Dendritic cell treated with granulocyte-macrophage colony-stimulating factor and Interleukin-4, amounts not matched to agents 40 ng/mL and 50 ng/mL, for 4 days (primary cell): ENCODE measurements at regions of chr1 and their contacts with region 1.

Region 1: GRCh38 chr1:40709100-40709801 is 17.7 kb downstream of the NFYC start:
- H3K4me3 Mint-ChIP-seq: peak overlapping the region; percentile 63
- H3K27ac Mint-ChIP-seq: peak overlapping the region; percentile 68
- H3K4me1 Mint-ChIP-seq: peaks cover 56% of the 10 kb centered on the region
- H3K27me3 Mint-ChIP-seq: no peaks in the 10 kb centered on the region

Region 2: GRCh38 chr1:40531381-40532061 is 177.7 kb before region 1 on chr1 and contains the start of gene ZNF684:
- intact Hi-C with region 1: no loop called
- H3K4me3 Mint-ChIP-seq: peak within 1 kb of the TSS; percentile 96
- H3K27ac Mint-ChIP-seq: peak within 1 kb of the TSS; percentile 92
- H3K4me1 Mint-ChIP-seq: peaks cover 19% of the 10 kb centered on the region
- H3K27me3 Mint-ChIP-seq: no peaks in the 10 kb centered on the region

Region 3: GRCh38 chr1:40650075-40650474 is 59.2 kb before region 1 on chr1:
- intact Hi-C with region 1: no loop called
- H3K4me3 Mint-ChIP-seq: no peak overlapping the region
- H3K27ac Mint-ChIP-seq: no peak overlapping the region
- H3K4me1 Mint-ChIP-seq: peaks cover 21% of the 10 kb centered on the region
- H3K27me3 Mint-ChIP-seq: peaks cover 12% of the 10 kb centered on the region

Region 4: DNA sequence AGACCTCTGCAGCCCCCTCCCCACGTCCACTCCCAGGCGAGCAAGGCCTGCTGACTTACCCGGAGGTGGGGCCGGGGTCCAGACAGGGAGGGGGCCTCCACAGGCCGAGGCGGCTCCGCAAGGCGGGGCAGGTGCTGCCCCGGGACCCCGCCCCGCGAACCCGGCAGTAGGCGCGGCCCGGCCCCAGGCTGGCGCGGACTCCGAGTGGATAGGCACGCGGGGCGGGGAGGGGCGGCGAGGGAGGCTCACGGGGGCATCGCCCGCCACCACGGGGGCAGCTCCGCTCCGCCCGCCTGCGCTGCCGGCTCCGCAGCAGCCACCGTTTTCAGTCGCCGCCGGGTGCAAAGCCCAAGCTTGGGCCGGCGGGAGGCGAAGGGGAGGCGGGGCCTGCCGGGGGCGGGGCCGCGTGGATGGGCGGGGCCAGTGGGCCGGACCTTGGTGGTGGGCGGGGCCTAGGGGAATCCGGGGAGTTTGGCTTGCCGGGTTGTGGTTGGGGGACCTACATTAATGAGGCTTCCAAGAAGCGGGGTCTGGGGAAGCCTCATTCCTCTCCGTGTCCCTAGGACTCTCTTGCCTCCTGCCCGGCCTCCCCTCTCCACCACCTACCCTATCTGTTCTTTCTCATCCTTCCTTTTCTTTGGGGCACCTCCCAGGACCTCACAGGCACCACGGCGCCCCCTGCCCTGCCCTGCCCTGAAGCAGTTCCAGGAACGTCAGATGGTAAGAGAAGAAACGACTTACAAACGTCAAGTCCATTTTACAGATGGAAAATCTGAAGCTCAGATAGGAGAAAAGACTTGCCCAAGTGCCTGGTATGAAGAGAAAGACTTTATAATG is 43.7 kb before region 1 on chr1 and contains the start of gene RIMS3:
- intact Hi-C with region 1: no loop called
- H3K4me3 Mint-ChIP-seq: peak within 1 kb of the TSS; percentile 81
- H3K27ac Mint-ChIP-seq: peak within 1 kb of the TSS; percentile 74
- H3K4me1 Mint-ChIP-seq: peaks cover 41% of the 10 kb centered on the region
- H3K27me3 Mint-ChIP-seq: peaks cover 20% of the 10 kb centered on the region

Region 5: DNA sequence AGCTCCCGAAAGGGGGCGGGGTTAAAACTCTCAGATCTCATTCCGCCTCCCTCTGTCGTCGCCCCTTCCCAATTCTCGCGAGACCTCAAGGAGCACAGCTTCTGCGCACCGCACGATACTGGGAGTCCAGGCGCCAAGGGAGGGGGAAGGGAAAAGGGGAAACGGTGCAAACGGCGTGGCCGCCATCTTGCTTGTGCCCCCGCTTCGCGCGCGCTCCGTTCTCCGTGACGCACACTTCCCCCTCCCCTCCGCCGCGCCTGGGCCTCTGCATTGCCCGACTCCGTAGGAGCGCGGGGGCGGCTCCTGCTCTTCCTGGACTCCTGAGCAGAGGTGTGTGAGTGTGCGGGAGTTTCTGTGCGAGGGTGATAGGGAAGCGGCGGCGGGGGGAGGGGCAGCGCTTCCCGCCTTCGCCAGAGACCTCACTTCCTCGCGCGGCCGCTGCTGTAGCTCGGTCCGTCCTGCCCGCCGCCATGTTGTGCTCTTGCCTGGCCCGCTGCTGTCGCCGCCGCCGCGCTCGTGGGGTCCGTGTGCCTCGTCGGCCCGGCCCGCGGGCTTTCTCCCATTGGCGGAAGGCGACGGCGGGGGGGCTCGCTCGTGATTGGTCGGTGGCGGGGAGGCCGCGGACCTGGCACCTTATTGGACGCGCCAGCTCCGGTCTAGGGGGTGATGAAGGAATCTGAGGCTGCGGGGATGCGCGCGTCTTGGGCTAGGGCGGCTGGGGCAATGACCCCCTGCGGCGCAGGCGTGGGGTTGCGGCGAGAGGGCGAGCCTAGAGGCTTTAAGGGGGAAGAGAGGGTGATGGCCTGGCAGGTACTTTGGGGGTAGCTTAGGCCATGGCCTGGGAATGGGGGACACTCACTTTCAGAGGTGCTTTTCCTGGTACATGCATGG is 17.5 kb before region 1 on chr1 and contains the start of gene NFYC:
- intact Hi-C with region 1: loop called (anchors 2 kb)
- H3K4me3 Mint-ChIP-seq: peak within 1 kb of the TSS; percentile 96
- H3K27ac Mint-ChIP-seq: peak within 1 kb of the TSS; percentile 99
- H3K4me1 Mint-ChIP-seq: peaks cover 59% of the 10 kb centered on the region
- H3K27me3 Mint-ChIP-seq: no peaks in the 10 kb centered on the region